ENCODE measurements at regions of chr3 and their contacts with region 1.

Region 1: GRCh38 chr3:10758304-10759061 is 57.5 kb upstream of the SLC6A11 start:
- DNase-seq: peak; percentile 70
- H3K4me3 ChIP-seq: no peak overlapping the region
- H3K27ac ChIP-seq: no peak overlapping the region
- H3K4me1 ChIP-seq: no peaks in the 10 kb centered on the region
- H3K27me3 ChIP-seq: peaks cover 4% of the 10 kb centered on the region
- CTCF ChIP-seq: peak; percentile 76

Region 2: DNA sequence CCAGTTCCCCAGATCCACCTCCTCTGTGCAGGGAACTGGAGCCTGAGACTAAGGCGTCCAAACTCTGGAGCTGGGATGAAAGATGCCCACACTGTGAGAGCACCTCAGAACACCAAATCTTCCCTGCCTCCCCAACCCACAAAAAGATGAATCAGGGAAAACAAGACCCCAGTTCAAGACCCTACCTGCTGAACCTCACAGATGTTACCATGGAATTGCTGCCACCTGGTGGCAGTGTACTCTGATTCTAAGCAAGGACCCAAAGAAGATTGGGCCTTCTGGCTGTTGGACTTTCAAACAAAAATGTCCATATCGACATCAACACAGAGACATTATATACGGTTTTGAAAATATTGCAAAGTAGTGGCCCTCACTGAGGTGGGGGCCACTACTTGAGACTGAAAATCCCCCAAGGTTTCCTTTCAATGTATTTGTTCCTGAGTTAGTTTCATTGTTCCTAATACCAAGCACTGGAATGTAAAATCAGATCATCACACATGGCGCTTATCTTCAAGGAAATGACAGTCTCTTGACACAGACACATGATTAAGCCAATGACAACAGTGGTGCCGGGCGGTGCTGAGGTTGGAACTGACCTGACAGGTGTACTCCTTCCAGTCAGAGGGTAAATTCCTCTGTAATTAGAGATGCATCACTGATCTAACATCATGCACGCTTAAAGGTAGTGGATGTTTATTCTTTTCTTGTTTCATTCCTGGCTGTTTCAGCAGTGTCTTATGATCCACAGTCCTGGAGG is 125.2 kb after region 1 on chr3:
- CTCF ChIA-PET with region 1: interaction called, 8 read pairs
- POLR2A ChIA-PET with region 1: no interaction called
- intact Hi-C with region 1: loop called (anchors 1 kb)
- DNase-seq: peak; percentile 22
- H3K4me3 ChIP-seq: no peak overlapping the region
- H3K27ac ChIP-seq: no peak overlapping the region
- H3K4me1 ChIP-seq: no peaks in the 10 kb centered on the region
- H3K27me3 ChIP-seq: peaks cover 8% of the 10 kb centered on the region
- CTCF ChIP-seq: peak; percentile 57